OCI-LY7 (cell line): ENCODE measurements at regions of chr11 and their contacts with region 1.

Region 1: GRCh38 chr11:111213256-111213655 is 32.3 kb upstream of the POU2AF2 start:
- DNase-seq: no peak
- H3K4me3 ChIP-seq: no peak overlapping the region
- H3K27ac ChIP-seq: no peak overlapping the region
- H3K4me1 ChIP-seq: no peaks in the 10 kb centered on the region
- CTCF ChIP-seq: no peak

Region 2: DNA sequence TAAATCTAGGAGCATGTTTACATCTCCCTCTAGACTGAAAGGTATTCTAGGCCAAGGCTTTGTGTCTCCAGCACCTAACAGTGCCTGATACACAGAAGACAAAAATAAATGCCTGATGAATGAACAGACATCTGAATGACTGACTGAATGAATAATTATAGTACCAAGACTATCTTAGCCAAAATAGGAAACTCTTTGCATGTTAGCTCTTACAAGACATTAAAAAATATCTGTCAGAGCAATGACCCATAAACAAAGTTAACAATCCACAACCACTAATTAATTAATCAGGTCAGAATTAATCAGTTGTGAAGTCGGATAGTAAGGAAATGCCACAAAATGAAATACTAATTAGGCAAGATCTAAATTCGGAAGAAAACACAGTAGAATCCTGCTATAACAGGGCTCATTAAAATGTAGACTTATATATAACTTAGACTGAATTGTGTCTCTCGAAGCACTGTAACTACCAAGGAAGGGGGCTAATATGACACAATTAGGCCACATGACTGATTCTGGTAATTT is 13.2 kb before region 1 on chr11:
- CTCF ChIA-PET with region 1: no interaction called
- POLR2A ChIA-PET with region 1: interaction called, 10 read pairs
- intact Hi-C with region 1: no loop called
- DNase-seq: no peak
- H3K4me3 ChIP-seq: no peak overlapping the region
- H3K27ac ChIP-seq: no peak overlapping the region
- H3K4me1 ChIP-seq: peaks cover 15% of the 10 kb centered on the region
- CTCF ChIP-seq: no peak